WTC11 (cell line): ENCODE measurements at regions of chr20 and their contacts with region 1.

Region 1: GRCh38 chr20:63973636-63974402 is 4.1 kb upstream of the ZNF512B start:
- DNase-seq: peak; percentile 89
- ATAC-seq: peak; percentile 70
- H3K4me3 Mint-ChIP-seq: peak overlapping the region; percentile 55
- H3K27ac Mint-ChIP-seq: no peak overlapping the region
- H3K4me1 Mint-ChIP-seq: peaks cover 18% of the 10 kb centered on the region
- H3K27me3 Mint-ChIP-seq: peaks cover 34% of the 10 kb centered on the region
- CTCF ChIP-seq: peak; percentile 98

Region 2: GRCh38 chr20:63641792-63642544 is 331.9 kb before region 1 on chr20:
- CTCF ChIA-PET with region 1: interaction called, 15 read pairs
- POLR2A ChIA-PET with region 1: no interaction called
- DNase-seq: peak; percentile 97
- ATAC-seq: peak; percentile 77
- H3K4me3 Mint-ChIP-seq: peak overlapping the region; percentile 72
- H3K27ac Mint-ChIP-seq: no peak overlapping the region
- H3K4me1 Mint-ChIP-seq: peaks cover 9% of the 10 kb centered on the region
- H3K27me3 Mint-ChIP-seq: no peaks in the 10 kb centered on the region
- CTCF ChIP-seq: no peak

Region 3: DNA sequence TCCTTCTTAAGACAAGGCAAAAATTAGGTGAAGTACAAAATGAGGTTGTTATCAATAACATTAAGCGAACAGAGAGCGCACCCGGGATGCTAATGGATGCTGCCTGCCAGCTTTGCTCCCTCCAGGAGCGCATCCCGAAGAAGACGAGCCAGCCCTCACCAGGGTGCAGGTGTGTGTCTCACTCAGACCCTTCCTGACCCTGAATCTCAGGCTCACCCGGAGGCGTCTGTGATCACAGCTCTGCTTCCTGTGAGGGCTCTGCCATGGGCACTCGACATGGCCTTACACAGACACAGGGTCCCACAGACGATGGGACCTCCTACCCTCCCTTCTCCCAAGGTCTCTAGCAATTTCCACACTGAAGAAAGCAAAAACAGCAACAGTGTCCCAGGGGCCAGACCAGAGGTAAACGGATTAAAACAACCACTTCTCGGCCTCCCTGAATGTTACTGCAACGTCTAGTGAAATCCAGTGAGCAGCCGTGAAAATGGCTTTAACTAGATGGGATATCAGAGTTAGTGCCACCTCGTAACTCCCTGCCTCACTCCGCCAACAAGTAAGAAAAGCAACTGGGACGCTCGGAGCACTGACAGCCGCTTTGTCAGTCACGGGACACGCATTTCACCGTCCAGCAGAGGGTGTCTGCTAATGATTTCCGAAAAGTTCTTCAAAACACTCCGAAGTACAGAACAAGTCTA is 154.4 kb before region 1 on chr20:
- CTCF ChIA-PET with region 1: no interaction called
- POLR2A ChIA-PET with region 1: no interaction called
- DNase-seq: no peak
- ATAC-seq: peak; percentile 64
- H3K4me3 Mint-ChIP-seq: no peak overlapping the region
- H3K27ac Mint-ChIP-seq: peak overlapping the region; percentile 25; the same call in 1 of the 2 replicates
- H3K4me1 Mint-ChIP-seq: peaks cover 9% of the 10 kb centered on the region; the same call in 1 of the 2 replicates
- H3K27me3 Mint-ChIP-seq: no peaks in the 10 kb centered on the region
- CTCF ChIP-seq: no peak

Region 4: GRCh38 chr20:63864847-63865640 is 108.8 kb before region 1 on chr20 and contains the start of gene TPD52L2:
- CTCF ChIA-PET with region 1: interaction called, 16 read pairs
- POLR2A ChIA-PET with region 1: interaction called, 3 read pairs
- DNase-seq: peak; percentile 99
- ATAC-seq: peak; percentile 94
- H3K4me3 Mint-ChIP-seq: peak within 1 kb of the TSS; percentile 94
- H3K27ac Mint-ChIP-seq: peak within 1 kb of the TSS; percentile 87
- H3K4me1 Mint-ChIP-seq: peaks cover 27% of the 10 kb centered on the region
- H3K27me3 Mint-ChIP-seq: no peaks in the 10 kb centered on the region
- CTCF ChIP-seq: no peak
- total RNA-seq, gene TPD52L2: 80.8 to 87.2 TPM (median 85.6 TPM) in 3 replicates

Region 5: DNA sequence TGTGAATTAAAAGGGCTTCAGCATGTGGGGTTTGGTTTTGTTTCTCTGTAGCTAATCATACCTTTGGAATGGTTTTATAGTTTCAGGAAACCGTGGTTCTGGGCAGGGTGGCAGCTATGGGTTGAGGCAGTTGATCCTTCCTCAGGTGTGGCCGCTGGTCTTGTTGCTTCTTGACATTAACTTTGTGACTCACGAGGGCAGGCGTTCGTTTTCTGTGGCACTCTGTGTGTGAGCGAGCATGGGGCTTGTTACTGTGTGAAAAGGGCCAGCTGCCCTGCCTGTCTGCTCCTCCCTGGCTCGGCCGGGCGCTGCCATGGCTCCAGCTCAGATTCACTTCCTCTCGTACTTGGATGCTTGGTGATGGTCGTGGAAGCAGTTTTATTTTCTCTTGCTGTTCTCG is 62.6 kb before region 1 on chr20:
- CTCF ChIA-PET with region 1: interaction called, 11 read pairs
- POLR2A ChIA-PET with region 1: interaction called, 3 read pairs
- DNase-seq: no peak
- ATAC-seq: no peak
- H3K4me3 Mint-ChIP-seq: no peak overlapping the region
- H3K27ac Mint-ChIP-seq: peak overlapping the region; percentile 67
- H3K4me1 Mint-ChIP-seq: peaks cover 9% of the 10 kb centered on the region
- H3K27me3 Mint-ChIP-seq: no peaks in the 10 kb centered on the region
- CTCF ChIP-seq: no peak

Region 6: DNA sequence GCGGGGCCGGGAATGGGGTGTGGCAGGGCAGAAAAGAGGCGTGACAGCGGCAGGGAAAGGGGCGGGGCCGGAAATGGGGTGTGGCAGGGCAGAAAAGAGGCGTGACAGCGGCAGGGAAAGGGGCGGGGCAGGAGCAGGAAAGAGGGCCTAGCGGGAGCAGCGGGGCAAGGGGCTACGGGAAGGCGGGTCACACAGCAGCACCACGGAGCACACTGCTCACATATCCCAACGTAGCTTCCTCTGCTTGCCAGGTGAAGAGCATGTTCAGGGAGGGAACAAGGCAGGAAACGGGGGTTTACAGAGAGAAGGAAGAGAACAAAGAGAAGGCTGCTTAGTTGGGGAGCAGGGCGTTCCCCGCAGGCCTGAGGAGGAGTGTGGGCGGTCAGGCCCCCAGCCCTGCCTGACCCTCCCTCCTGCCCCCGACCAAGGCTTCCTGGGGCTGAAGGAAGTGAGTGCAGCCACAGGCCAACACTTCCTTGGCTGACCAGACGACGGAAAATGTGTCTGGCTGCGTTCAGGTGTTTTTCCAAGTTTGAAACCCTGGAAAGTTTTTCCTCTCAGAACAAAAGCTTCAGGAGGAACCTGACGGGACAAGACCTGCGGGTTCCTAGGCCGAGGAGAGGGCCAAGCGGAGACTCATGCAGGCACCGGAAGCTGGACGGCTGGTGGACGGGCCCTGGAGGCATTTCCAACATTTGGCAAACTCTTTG is 31.4 kb before region 1 on chr20:
- CTCF ChIA-PET with region 1: interaction called, 19 read pairs
- POLR2A ChIA-PET with region 1: no interaction called
- DNase-seq: peak; percentile 87
- ATAC-seq: peak; percentile 60
- H3K4me3 Mint-ChIP-seq: peak overlapping the region; percentile 47
- H3K27ac Mint-ChIP-seq: peak overlapping the region; percentile 95
- H3K4me1 Mint-ChIP-seq: peaks cover 6% of the 10 kb centered on the region
- H3K27me3 Mint-ChIP-seq: no peaks in the 10 kb centered on the region
- CTCF ChIP-seq: no peak

Region 7: DNA sequence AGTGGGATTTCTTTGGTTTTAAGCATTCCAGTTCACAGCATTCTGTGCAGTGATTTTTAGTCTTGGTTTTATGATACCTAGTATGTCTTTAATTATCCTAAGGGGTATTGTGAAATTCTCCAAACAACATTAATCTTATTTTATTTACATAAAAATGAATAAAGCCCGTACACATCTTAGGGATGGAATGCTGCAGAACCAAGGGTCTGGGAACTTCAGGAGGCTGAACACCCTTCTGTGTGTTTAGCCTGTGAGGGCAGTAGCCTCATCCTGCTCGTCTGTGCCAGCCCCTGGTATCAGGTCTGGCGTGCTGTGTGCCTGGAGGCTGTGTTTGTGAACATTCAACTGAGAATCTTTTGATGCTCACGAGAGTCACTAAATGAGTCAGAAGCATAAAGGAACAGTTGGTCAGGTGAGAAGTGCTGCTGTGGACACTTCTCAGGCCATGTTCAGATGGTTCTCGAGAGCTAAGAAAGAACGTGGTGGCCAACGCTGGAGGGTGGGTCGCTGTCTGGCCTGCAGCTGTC is 37.0 kb after region 1 on chr20:
- CTCF ChIA-PET with region 1: no interaction called
- POLR2A ChIA-PET with region 1: no interaction called
- DNase-seq: no peak
- ATAC-seq: no peak
- H3K4me3 Mint-ChIP-seq: no peak overlapping the region
- H3K27ac Mint-ChIP-seq: no peak overlapping the region
- H3K4me1 Mint-ChIP-seq: no peaks in the 10 kb centered on the region
- H3K27me3 Mint-ChIP-seq: no peaks in the 10 kb centered on the region
- CTCF ChIP-seq: no peak